Head of caudate nucleus (tissue), 42 donors: ENCODE measurements at regions of chrX and their contacts with region 1.

Region 1: DNA sequence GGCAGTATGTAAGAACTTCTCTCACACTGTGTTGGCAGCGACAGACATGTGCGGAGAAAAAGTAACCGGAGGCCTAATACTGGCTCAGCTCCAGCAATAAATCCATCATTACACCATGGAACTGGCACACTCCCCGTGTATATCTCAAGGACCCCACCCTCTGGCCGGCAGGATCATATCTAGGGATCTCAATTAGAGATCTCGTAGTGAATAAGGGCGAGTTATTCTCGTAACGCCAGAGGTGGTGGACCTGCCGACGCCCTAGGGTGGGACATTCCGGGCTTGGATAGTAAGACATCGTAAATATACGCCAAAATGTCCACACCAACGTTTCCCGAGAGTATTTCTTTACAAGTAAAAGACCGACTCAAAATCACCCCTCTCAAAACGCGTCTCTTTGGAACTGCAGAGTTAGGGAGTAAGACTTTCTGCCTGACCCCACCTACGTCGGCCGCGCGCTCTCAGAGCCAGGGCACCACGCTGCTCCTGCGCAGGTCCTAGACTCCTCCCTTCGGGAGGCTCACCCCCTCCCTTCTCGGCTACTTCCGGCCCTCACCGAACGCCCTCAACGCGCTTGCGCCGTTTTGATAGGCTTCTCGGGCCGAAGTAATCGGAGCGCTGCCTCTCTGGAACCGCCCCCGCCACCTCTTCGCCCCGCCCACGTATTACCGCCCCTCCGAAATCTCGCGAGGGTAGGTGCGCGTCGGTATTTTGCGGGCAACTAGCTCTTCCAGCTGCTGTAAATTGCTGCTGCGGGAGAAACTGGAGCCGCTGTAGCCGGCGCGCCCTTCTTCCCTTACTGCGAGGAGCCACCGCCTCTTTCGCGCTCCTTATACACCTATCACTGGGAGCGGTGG is at the start of gene WDR44:
- DNase-seq: peak; percentile 82 to 96 (median 92)

Region 2: GRCh38 chrX:118226090-118226428 is 119.6 kb before region 1 on chrX:
- intact Hi-C with region 1: no loop called
- DNase-seq: no peak

Region 3: DNA sequence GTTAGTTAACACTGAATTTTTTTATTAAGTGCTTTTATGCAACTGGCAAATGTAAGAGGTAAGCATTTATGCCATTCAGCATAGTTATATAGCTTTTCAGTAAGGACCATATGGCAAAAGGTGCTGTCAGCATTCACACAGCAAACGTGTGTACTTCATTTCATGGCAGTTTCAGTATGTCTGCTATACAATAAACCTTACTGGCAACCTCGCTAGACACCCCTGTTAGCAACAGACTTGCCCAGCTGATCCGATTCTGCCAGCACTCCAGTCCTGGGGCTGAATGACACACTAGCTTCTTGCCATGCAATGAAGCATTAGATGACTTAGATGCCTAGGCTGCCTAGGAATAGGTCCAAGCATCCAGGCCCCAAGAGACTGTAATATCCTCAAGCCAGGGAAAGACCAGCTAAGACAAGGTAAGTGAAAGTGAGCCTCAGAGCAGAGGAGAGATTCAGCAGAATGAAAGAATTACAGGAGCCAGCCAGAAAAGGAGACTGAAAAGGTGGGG is 102.7 kb after region 1 on chrX:
- intact Hi-C with region 1: no loop called
- DNase-seq: no peak

Region 4: GRCh38 chrX:118495061-118495921 is 149.7 kb after region 1 on chrX and contains the start of gene DOCK11:
- intact Hi-C with region 1: loop called (anchors 5 kb)
- DNase-seq: peak; percentile 30 to 86 (median 72)